Mammary epithelial cell (primary cell): ENCODE measurements at regions of chr9 and their contacts with region 1.

Region 1: GRCh38 chr9:19925817-19926503 is 137.1 kb upstream of the SLC24A2 start:
- DNase-seq: peak; percentile 86
- H3K4me3 ChIP-seq: peak overlapping the region; percentile 21 to 39 (median 36)
- H3K27ac ChIP-seq: no peak overlapping the region
- H3K4me1 ChIP-seq: no peaks in the 10 kb centered on the region
- H3K27me3 ChIP-seq: no peaks in the 10 kb centered on the region
- CTCF ChIP-seq: peak; percentile 96 to 98

Region 2: GRCh38 chr9:19243366-19244033 is 682.5 kb before region 1 on chr9:
- CTCF ChIA-PET with region 1: no interaction called
- dilution Hi-C with region 1: no loop called
- in situ Hi-C with region 1: no loop called
- intact Hi-C with region 1: no loop called
- DNase-seq: no peak
- H3K4me3 ChIP-seq: no peak overlapping the region
- H3K27ac ChIP-seq: no peak overlapping the region
- H3K4me1 ChIP-seq: no peaks in the 10 kb centered on the region
- H3K27me3 ChIP-seq: no peaks in the 10 kb centered on the region
- CTCF ChIP-seq: no peak

Region 3: GRCh38 chr9:19493174-19493811 is 432.7 kb before region 1 on chr9:
- CTCF ChIA-PET with region 1: interaction called, 4 read pairs
- dilution Hi-C with region 1: no loop called
- in situ Hi-C with region 1: loop called (anchors 5 to 10 kb)
- intact Hi-C with region 1: loop called (anchors 1 kb)
- DNase-seq: peak; percentile 52
- H3K4me3 ChIP-seq: peak overlapping the region; percentile 4 to 37 (median 32)
- H3K27ac ChIP-seq: no peak overlapping the region
- H3K4me1 ChIP-seq: peaks cover 4% of the 10 kb centered on the region
- H3K27me3 ChIP-seq: no peaks in the 10 kb centered on the region
- CTCF ChIP-seq: peak; percentile 77 to 83

Region 4: GRCh38 chr9:19741178-19741577 is 184.8 kb before region 1 on chr9:
- CTCF ChIA-PET with region 1: no interaction called
- dilution Hi-C with region 1: no loop called
- in situ Hi-C with region 1: no loop called
- intact Hi-C with region 1: no loop called
- DNase-seq: no peak
- H3K4me3 ChIP-seq: no peak overlapping the region
- H3K27ac ChIP-seq: no peak overlapping the region
- H3K4me1 ChIP-seq: no peaks in the 10 kb centered on the region
- H3K27me3 ChIP-seq: no peaks in the 10 kb centered on the region
- CTCF ChIP-seq: no peak

Region 5: DNA sequence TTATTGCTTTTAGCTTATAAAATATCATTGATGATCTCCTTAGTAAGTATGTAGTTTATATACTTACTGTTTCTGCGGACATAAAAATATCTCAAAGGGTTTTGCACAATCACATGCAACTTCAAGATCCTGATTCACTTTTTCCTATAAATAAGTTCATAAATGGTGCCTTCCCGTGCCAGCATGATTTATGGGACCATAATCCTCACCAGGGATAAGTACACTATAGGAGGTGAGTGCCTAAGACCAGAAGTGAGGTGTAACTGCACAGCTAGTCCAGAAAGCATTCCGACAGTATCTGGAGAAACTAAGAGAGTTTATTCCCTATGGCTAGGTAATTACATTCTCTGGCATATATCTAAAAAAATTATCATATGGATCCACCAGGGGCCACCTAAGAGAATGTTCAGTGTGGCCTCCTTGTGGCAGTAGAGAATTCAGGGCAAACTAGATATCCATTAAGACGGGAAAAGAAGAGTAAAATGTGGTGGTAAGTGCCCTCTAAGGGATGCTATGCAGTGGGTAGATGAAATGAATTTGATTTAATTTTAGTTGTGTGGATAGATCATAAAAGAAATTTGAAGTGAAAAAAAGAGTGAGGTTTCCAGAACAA is 265.4 kb after region 1 on chr9:
- CTCF ChIA-PET with region 1: no interaction called
- dilution Hi-C with region 1: no loop called
- in situ Hi-C with region 1: no loop called
- intact Hi-C with region 1: loop called (anchors 1 kb)
- DNase-seq: no peak
- H3K4me3 ChIP-seq: no peak overlapping the region
- H3K27ac ChIP-seq: no peak overlapping the region
- H3K4me1 ChIP-seq: no peaks in the 10 kb centered on the region
- H3K27me3 ChIP-seq: peaks cover 4% of the 10 kb centered on the region
- CTCF ChIP-seq: peak in 1 of 2 donors; percentile 36

Region 6: DNA sequence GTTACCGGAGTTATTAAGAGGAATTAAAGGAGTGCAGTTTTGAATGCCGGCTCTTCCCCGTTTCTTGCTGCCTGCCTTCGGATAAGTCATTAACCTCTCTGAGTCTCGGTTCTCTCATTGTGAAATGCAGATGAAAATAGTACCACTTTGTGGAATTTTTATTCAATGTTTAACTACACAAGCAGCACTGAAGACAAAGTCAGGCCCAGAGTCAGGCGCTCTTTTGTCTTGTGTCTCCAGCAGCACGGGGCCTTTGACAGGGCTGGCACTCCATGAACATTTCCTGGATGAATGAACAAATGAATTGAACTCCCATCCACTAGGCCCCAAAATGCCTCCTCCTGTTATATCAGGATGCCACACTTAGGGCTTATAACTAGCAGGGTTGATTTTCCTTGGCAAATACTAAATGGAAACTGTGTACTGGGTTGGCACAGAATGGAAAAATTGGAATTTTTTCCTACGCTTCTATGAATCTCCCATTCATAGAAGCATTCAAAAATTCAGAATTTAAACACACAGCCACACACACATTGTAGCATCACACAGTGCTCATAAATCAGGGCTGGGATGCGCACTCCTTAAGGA is 363.6 kb after region 1 on chr9:
- CTCF ChIA-PET with region 1: no interaction called
- dilution Hi-C with region 1: no loop called
- in situ Hi-C with region 1: no loop called
- intact Hi-C with region 1: no loop called
- DNase-seq: no peak
- H3K4me3 ChIP-seq: no peak overlapping the region
- H3K27ac ChIP-seq: no peak overlapping the region
- H3K4me1 ChIP-seq: peaks cover 5% of the 10 kb centered on the region
- H3K27me3 ChIP-seq: no peaks in the 10 kb centered on the region
- CTCF ChIP-seq: no peak

Region 7: DNA sequence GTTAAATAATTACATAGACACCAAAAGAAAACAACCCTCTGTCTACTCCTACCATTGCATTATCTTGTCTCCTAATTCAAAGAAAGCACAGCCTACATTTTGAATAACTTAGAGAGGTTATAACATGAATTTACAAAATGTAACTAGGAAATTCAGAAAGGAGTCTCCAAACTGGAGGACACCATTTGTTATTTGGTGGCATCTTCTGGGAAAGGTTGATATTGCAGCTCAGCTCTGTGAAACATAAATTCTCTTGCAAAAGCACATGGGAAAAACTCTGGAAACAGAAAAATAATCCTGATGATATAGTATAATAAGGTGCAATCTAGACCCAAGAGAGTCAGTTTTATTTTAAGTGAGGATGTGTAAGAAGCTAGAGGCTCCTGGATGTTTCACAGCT is 481.1 kb after region 1 on chr9:
- CTCF ChIA-PET with region 1: no interaction called
- dilution Hi-C with region 1: no loop called
- in situ Hi-C with region 1: no loop called
- intact Hi-C with region 1: loop called (anchors 2 kb)
- DNase-seq: no peak
- H3K4me3 ChIP-seq: no peak overlapping the region
- H3K27ac ChIP-seq: no peak overlapping the region
- H3K4me1 ChIP-seq: no peaks in the 10 kb centered on the region
- H3K27me3 ChIP-seq: no peaks in the 10 kb centered on the region
- CTCF ChIP-seq: peak; percentile 8 to 34

Region 8: GRCh38 chr9:20941174-20941690 is 1015.3 kb after region 1 on chr9:
- CTCF ChIA-PET with region 1: no interaction called
- dilution Hi-C with region 1: no loop called
- in situ Hi-C with region 1: loop called (anchors 25 kb)
- intact Hi-C with region 1: loop called (anchors 1 kb)
- DNase-seq: peak; percentile 66
- H3K4me3 ChIP-seq: no peak overlapping the region
- H3K27ac ChIP-seq: no peak overlapping the region
- H3K4me1 ChIP-seq: no peaks in the 10 kb centered on the region
- H3K27me3 ChIP-seq: no peaks in the 10 kb centered on the region
- CTCF ChIP-seq: peak; percentile 79 to 81